ENCODE measurements at regions of chr11 and their contacts with region 1.

Region 1: DNA sequence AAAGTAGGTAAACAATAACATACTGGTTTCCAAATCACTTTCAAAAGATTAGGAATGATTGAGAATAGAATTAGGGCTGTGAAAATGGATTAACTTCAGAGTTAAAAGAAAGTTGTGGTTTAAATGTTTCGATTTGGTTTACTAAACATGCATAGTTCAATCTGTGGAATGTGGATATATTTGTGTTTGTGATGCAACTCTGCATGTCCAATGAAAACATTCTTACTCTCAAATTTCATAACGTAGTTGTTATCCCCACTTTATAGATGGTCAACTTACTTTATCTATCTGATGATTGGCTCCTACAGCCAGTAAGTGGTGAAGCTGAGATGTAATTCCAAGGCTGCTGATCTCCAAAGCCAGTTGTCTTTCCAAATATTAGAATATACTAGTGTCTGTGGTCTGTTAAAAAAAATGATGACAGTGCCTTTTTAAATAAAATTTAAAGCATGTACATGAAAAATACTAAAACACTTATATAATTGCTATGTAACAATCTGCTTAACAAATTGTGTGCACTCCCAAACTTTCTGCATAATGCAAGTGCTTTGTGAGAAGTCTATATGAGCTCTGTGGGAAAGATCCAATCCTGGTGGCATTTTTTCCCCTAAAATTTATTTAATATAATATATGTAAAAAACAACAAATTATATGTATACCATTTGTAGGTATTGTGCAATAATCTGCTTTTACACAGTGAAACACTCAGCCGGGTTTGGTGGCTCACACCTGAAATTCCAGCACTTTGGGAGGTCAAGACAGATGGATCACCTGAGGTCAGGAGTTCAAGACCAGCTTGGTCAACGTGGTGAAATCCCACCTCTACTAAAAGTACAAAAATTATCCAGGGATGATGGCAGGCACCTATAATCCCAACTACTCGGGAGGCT is 9.7 kb upstream of the SIK3 start:
- DNase-seq: no peak
- H3K4me3 ChIP-seq: no peak overlapping the region
- H3K4me3 Mint-ChIP-seq: no peak overlapping the region
- H3K27ac ChIP-seq: no peak overlapping the region
- H3K27ac Mint-ChIP-seq: no peak overlapping the region
- H3K4me1 ChIP-seq: no peaks in the 10 kb centered on the region
- H3K4me1 Mint-ChIP-seq: peaks cover 3 to 5% (median 4%) of the 10 kb centered on the region in 3 donors
- H3K27me3 ChIP-seq: no peaks in the 10 kb centered on the region
- H3K27me3 Mint-ChIP-seq: peaks cover 0 to 4% of the 10 kb centered on the region in 2 donors

Region 2: GRCh38 chr11:116732271-116733042 is 375.5 kb before region 1 on chr11:
- CTCF ChIA-PET with region 1: interaction called, 11 read pairs
- POLR2A ChIA-PET with region 1: no interaction called
- DNase-seq: peak; percentile 29 to 64 (median 40)
- H3K4me3 ChIP-seq: no peak overlapping the region
- H3K4me3 Mint-ChIP-seq: peak overlapping the region in 1 of 7 donors; percentile 12
- H3K27ac ChIP-seq: no peak overlapping the region
- H3K27ac Mint-ChIP-seq: peak overlapping the region in 2 of 8 donors; percentile 58 to 77
- H3K4me1 ChIP-seq: peaks cover 3% of the 10 kb centered on the region
- H3K4me1 Mint-ChIP-seq: peaks cover 9 to 10% (median 10%) of the 10 kb centered on the region in 3 donors
- H3K27me3 ChIP-seq: no peaks in the 10 kb centered on the region
- H3K27me3 Mint-ChIP-seq: peaks cover 2 to 13% of the 10 kb centered on the region in 2 donors

Region 3: GRCh38 chr11:116853461-116854073 is 254.4 kb before region 1 on chr11:
- CTCF ChIA-PET with region 1: interaction called, 20 read pairs
- POLR2A ChIA-PET with region 1: interaction called, 6 read pairs
- DNase-seq: peak; percentile 27 to 80 (median 70)
- H3K4me3 ChIP-seq: peak overlapping the region; percentile 27
- H3K4me3 Mint-ChIP-seq: peak overlapping the region; percentile 29 to 85 (median 74)
- H3K27ac ChIP-seq: peak overlapping the region; percentile 68
- H3K27ac Mint-ChIP-seq: peak overlapping the region; percentile 83 to 99 (median 92)
- H3K4me1 ChIP-seq: peaks cover 73% of the 10 kb centered on the region
- H3K4me1 Mint-ChIP-seq: peaks cover 73 to 81% (median 78%) of the 10 kb centered on the region in 3 donors
- H3K27me3 ChIP-seq: no peaks in the 10 kb centered on the region
- H3K27me3 Mint-ChIP-seq: peaks cover 0 to 2% of the 10 kb centered on the region in 2 donors

Region 4: DNA sequence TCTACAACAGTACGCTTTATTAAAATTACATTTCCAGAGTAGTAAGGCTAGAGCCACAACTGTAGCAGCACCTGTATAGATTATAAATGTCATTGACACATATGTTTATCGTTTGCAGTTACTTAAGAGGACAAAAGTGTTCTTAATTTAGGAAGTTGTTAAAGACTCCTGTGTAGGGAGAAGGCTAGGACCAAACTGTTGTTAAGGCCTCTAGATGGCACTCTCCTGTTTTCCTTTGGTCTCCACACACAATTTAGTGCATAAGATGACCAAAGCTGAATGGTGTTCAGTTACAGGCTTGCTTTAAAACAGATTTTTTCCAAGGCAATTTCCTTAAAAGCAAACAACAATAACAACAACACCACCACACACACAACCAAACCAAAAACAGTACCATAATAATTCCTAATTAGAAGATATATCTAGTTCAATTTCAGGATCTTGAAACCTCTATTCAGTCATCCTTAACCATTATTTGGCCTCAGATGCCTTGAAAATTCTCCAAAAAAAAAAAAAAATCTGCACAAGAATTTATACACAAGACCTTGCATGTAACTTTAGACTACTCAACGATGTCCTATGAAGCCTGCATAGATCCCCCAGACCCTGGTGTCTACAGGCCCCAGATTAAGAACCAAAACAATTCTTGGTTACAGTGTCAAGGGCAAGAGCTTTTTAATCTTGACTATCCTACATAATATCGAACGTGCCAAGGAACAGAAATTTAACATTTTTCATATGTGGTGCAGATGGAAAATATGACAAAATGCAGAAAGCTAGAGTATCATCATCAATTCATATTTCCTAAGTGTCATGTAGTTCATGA is 227.9 kb before region 1 on chr11:
- CTCF ChIA-PET with region 1: interaction called, 42 read pairs
- POLR2A ChIA-PET with region 1: interaction called, 5 read pairs
- DNase-seq: peak in 2 of 5 donors; percentile 29 to 47
- H3K4me3 ChIP-seq: no peak overlapping the region
- H3K4me3 Mint-ChIP-seq: no peak overlapping the region
- H3K27ac ChIP-seq: no peak overlapping the region
- H3K27ac Mint-ChIP-seq: peak overlapping the region in 6 of 8 donors; percentile 31 to 82 (median 71)
- H3K4me1 ChIP-seq: no peaks in the 10 kb centered on the region
- H3K4me1 Mint-ChIP-seq: peaks cover 9 to 20% (median 13%) of the 10 kb centered on the region in 3 donors
- H3K27me3 ChIP-seq: no peaks in the 10 kb centered on the region
- H3K27me3 Mint-ChIP-seq: peaks cover 0 to 1% of the 10 kb centered on the region in 2 donors

Region 5: DNA sequence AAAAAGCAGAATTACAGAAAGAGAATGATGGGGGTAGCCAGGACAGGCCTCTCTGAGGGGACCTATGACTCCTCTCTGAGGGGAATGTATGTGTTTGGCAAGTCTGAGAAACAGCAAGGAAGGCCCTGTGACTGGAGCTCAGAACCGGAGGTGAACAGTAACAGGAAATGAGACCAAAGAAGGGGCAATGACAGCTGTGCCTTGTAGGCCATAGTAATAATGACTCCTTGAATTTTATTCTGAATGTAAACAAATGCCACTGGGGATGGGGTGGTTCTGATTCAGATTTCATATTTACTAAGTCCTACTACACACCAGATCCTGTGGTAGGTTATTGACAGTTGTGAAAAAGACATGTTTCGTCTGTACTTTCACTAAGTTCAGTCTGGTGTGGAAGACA is 217.8 kb before region 1 on chr11:
- CTCF ChIA-PET with region 1: interaction called, 10 read pairs
- POLR2A ChIA-PET with region 1: interaction called, 9 read pairs
- DNase-seq: peak in 2 of 5 donors; percentile 8 to 47
- H3K4me3 ChIP-seq: no peak overlapping the region
- H3K4me3 Mint-ChIP-seq: peak overlapping the region in 3 of 7 donors; percentile 10 to 23 (median 22)
- H3K27ac ChIP-seq: no peak overlapping the region
- H3K27ac Mint-ChIP-seq: peak overlapping the region; percentile 56 to 90 (median 74)
- H3K4me1 ChIP-seq: peaks cover 12% of the 10 kb centered on the region
- H3K4me1 Mint-ChIP-seq: peaks cover 27 to 39% (median 39%) of the 10 kb centered on the region in 3 donors
- H3K27me3 ChIP-seq: no peaks in the 10 kb centered on the region
- H3K27me3 Mint-ChIP-seq: no peaks in the 10 kb centered on the region

Region 6: DNA sequence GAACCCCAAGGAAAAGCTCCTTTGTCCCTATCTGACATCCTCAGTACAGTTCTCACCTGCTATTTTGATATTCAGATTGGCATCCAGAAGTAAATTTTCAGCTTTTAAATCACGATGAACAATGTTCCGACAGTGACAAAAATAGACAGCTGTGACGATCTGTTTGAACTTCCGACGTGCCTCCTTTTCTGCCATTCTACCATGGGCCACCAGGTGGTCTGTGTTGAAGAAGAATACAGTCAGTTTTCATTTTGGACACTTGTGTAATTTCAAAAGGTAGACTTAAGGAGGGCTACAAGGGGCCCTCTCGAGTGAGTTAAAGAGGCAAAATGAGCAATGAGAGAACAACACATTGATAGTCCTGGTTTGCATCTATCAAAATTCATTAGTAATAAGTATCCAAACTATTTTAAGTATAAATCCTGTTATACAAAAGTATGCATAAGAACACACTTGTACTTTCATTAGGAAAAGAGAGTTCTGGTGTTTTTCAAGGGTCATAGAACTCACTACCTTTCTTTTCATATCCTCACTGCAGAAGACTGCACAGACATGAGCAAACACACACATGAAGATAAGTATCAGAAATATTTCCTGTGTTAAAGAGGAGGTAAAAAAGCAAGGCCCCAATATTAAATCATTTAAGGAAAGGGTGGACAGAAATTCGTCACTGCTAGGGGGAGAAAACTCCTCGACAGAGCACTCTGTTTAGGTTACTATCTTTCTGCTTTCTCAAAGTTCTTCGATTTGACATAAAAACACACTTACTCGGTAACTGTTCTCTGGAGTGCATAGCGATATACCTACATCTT is 180.6 kb before region 1 on chr11:
- CTCF ChIA-PET with region 1: interaction called, 14 read pairs
- POLR2A ChIA-PET with region 1: no interaction called
- DNase-seq: peak; percentile 8 to 70 (median 50)
- H3K4me3 ChIP-seq: peak overlapping the region; percentile 1
- H3K4me3 Mint-ChIP-seq: peak overlapping the region; percentile 17 to 94 (median 81)
- H3K27ac ChIP-seq: peak overlapping the region; percentile 46
- H3K27ac Mint-ChIP-seq: peak overlapping the region; percentile 92 to 100 (median 98)
- H3K4me1 ChIP-seq: peaks cover 84% of the 10 kb centered on the region
- H3K4me1 Mint-ChIP-seq: peaks cover 89 to 93% (median 92%) of the 10 kb centered on the region in 3 donors
- H3K27me3 ChIP-seq: no peaks in the 10 kb centered on the region
- H3K27me3 Mint-ChIP-seq: no peaks in the 10 kb centered on the region

Region 7: GRCh38 chr11:117226388-117227385 is 118.7 kb after region 1 on chr11:
- CTCF ChIA-PET with region 1: interaction called, 13 read pairs
- POLR2A ChIA-PET with region 1: no interaction called
- DNase-seq: peak; percentile 22 to 65 (median 62)
- H3K4me3 ChIP-seq: no peak overlapping the region
- H3K4me3 Mint-ChIP-seq: peak overlapping the region in 5 of 7 donors; percentile 36 to 53 (median 50)
- H3K27ac ChIP-seq: no peak overlapping the region
- H3K27ac Mint-ChIP-seq: peak overlapping the region; percentile 35 to 90 (median 78)
- H3K4me1 ChIP-seq: peaks cover 33% of the 10 kb centered on the region
- H3K4me1 Mint-ChIP-seq: peaks cover 39 to 55% (median 46%) of the 10 kb centered on the region in 3 donors
- H3K27me3 ChIP-seq: no peaks in the 10 kb centered on the region
- H3K27me3 Mint-ChIP-seq: no peaks in the 10 kb centered on the region

Measured in CD8-positive, alpha-beta memory T cell (primary cell).